ENCODE measurements at regions of chr7 and their contacts with region 1.

Region 1: GRCh38 chr7:50229964-50230363 is 74.6 kb upstream of the IKZF1 start:
- DNase-seq: peak in 1 of 3 donors; percentile 8
- H3K4me3 ChIP-seq: no peak overlapping the region
- H3K4me3 Mint-ChIP-seq: no peak overlapping the region
- H3K27ac ChIP-seq: no peak overlapping the region
- H3K27ac Mint-ChIP-seq: no peak overlapping the region
- H3K4me1 ChIP-seq: peaks cover 19 to 32% of the 10 kb centered on the region in 2 donors
- H3K4me1 Mint-ChIP-seq: peaks cover 28% of the 10 kb centered on the region
- H3K27me3 ChIP-seq: no peaks in the 10 kb centered on the region
- H3K27me3 Mint-ChIP-seq: no peaks in the 10 kb centered on the region
- CTCF ChIP-seq: peak; percentile 49

Region 2: GRCh38 chr7:50251765-50252164 is 21.8 kb after region 1 on chr7:
- intact Hi-C with region 1: no loop called
- DNase-seq: no peak
- H3K4me3 ChIP-seq: no peak overlapping the region
- H3K4me3 Mint-ChIP-seq: no peak overlapping the region
- H3K27ac ChIP-seq: no peak overlapping the region
- H3K27ac Mint-ChIP-seq: peak overlapping the region in 1 of 7 donors; percentile 68
- H3K4me1 ChIP-seq: no peaks in the 10 kb centered on the region
- H3K4me1 Mint-ChIP-seq: peaks cover 1% of the 10 kb centered on the region
- H3K27me3 ChIP-seq: no peaks in the 10 kb centered on the region
- H3K27me3 Mint-ChIP-seq: peaks cover 0 to 5% (median 0%) of the 10 kb centered on the region in 3 donors
- CTCF ChIP-seq: no peak

Region 3: DNA sequence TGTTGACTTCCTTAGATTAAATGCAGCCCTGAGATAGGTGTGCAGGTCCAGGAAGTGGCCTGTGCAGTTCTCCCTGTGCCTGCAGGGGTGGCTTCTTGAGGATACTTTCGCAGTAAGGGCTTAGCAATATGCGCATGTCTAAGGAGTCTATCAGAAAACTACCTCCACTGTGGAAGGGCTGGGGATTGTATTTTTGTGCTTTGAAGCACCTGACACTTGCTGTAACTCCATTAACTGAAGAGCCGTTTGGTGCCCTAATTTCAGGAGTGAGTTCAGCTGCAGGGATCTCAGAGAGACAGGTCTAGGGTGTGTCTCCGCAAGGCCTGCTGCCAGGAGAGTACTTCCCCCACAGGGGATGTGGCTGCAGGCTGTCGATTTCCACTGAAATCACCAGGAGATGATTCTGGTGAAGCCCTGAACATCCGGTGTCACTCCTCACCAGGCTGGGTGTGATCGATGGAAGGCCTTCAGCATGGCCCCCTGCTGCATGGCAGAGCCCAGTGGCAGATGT is 110.1 kb after region 1 on chr7:
- intact Hi-C with region 1: no loop called
- DNase-seq: no peak
- H3K4me3 ChIP-seq: no peak overlapping the region
- H3K4me3 Mint-ChIP-seq: no peak overlapping the region
- H3K27ac ChIP-seq: peak overlapping the region; percentile 37 to 72
- H3K27ac Mint-ChIP-seq: peak overlapping the region; percentile 15 to 87 (median 76)
- H3K4me1 ChIP-seq: peaks cover 61 to 76% of the 10 kb centered on the region in 2 donors
- H3K4me1 Mint-ChIP-seq: peaks cover 80% of the 10 kb centered on the region
- H3K27me3 ChIP-seq: no peaks in the 10 kb centered on the region
- H3K27me3 Mint-ChIP-seq: no peaks in the 10 kb centered on the region
- CTCF ChIP-seq: no peak

Region 4: DNA sequence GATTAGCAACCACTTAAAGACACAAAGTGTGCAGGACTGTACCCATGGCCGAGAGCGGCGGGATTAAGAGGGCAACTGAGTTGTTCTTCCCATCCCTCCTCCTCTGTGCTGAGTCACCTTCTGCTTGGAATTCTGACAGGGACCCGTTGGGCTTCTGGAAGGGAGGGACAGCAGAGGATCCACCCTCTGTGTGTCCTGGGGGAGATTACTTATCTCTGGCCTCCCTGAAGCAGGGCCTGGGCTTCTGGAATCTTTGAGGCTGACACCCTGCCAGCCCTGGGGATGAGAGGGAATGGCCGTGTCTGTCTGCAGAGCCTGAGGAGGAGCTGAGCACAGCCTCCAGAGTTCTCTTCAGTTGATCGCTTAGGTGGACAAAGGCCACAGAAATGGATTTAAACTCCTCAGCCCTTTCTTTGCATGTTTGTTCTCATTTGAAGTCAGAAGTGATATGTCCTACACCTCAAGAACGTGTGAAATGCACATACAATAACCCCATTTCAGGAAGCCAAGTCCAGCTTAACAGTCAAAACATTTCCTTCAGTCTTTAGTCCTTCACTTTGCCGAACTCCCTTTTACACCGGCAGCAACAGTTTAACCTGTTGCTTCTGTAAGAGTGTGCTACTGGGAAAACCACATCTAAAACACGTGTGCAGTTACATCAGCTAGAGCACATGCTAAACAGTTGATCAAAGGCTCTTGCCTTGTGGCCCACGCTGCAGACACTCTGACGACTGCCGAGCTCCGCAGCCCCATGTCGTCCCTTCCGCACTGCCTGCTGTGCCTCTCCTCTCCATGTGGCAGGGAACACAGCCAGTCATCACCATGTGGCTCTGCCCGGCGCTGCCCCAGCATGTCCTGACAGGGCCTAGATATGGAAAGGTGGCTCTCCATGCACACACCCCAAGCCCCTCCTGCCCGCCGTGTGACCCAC is 130.3 kb after region 1 on chr7:
- intact Hi-C with region 1: loop called in 1 of 2 experiments (anchors 5 kb)
- DNase-seq: no peak
- H3K4me3 ChIP-seq: no peak overlapping the region
- H3K4me3 Mint-ChIP-seq: no peak overlapping the region
- H3K27ac ChIP-seq: peak overlapping the region in 1 of 2 donors; percentile 72
- H3K27ac Mint-ChIP-seq: peak overlapping the region in 6 of 7 donors; percentile 27 to 82 (median 52)
- H3K4me1 ChIP-seq: peaks cover 47 to 63% of the 10 kb centered on the region in 2 donors
- H3K4me1 Mint-ChIP-seq: peaks cover 78% of the 10 kb centered on the region
- H3K27me3 ChIP-seq: no peaks in the 10 kb centered on the region
- H3K27me3 Mint-ChIP-seq: no peaks in the 10 kb centered on the region
- CTCF ChIP-seq: no peak